ENCODE measurements at regions of chr2 and their contacts with region 1.

Region 1: GRCh38 chr2:217785544-217786045 is 217.2 kb downstream of the TNS1 start:
- DNase-seq: peak; percentile 70 to 90 (median 77)
- ATAC-seq: peak; percentile 88
- H3K4me3 ChIP-seq: no peak overlapping the region
- H3K27ac ChIP-seq: no peak overlapping the region
- H3K4me1 ChIP-seq: peaks cover 5 to 23% of the 10 kb centered on the region in 2 donors
- H3K27me3 ChIP-seq: no peaks in the 10 kb centered on the region
- CTCF ChIP-seq: peak; percentile 87 to 98

Region 2: DNA sequence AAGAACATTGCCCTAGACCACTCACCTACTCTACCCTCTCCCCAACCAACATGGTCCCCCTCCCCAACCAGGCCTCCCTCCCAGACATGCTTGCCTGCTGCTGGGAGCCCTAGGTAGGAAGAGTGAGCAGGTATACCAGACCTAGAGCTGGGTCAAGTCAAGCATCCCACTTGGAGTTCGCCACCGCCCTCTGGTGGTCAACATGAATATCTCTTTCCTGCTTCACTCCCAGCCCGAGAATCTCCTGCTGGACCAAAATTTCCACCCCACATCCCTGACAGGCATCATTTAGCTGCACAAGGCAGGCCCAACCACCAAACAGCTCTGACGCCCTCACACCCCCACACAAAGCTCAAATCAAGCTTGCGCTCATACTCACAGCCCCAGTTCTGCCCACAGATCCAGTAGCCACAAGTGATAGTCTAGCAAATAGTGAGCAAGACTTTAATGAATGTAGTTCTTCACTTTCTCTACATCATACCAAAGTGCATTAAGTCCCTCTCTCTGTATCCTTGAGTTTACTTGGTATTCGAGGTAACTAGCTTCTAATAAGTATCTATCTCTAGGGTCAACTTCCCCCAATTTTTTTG is 101.2 kb after region 1 on chr2:
- intact Hi-C with region 1: loop called in 1 of 2 experiments (anchors 5 kb)
- DNase-seq: peak in 3 of 4 donors; percentile 67 to 83 (median 68)
- ATAC-seq: peak; percentile 71
- H3K4me3 ChIP-seq: no peak overlapping the region
- H3K27ac ChIP-seq: peak overlapping the region in 1 of 2 donors; percentile 65
- H3K4me1 ChIP-seq: peaks cover 0 to 59% of the 10 kb centered on the region in 2 donors
- H3K27me3 ChIP-seq: no peaks in the 10 kb centered on the region
- CTCF ChIP-seq: peak; percentile 65 to 71

Region 3: GRCh38 chr2:217988014-217988839 is 202.6 kb after region 1 on chr2:
- intact Hi-C with region 1: loop called in 1 of 2 experiments (anchors 2 kb)
- DNase-seq: peak in 3 of 4 donors; percentile 71 to 91 (median 88)
- ATAC-seq: peak; percentile 91
- H3K4me3 ChIP-seq: no peak overlapping the region
- H3K27ac ChIP-seq: peak overlapping the region; percentile 29 to 75
- H3K4me1 ChIP-seq: peaks cover 15 to 23% of the 10 kb centered on the region in 2 donors
- H3K27me3 ChIP-seq: no peaks in the 10 kb centered on the region
- CTCF ChIP-seq: peak; percentile 90 to 98

Region 4: DNA sequence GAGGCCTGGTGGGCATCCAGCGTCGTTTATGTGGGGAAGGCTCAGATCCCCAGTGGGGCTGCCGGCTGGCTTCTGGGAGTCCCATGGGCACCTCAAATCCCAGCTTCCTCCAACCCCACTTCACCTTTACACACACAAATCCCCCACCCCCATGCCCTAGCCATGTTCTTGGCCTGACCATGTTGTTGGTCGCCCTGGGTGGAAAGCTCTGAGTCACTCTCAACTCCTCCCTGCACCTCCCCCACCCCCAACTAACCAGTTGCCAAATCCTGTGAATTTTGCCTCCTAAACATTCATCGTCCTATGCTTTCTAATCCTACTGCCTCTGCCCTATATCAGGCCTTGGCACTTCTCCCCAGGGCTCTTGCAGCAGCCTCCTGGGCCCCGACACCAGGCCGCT is 210.8 kb after region 1 on chr2:
- intact Hi-C with region 1: loop called in 1 of 2 experiments (anchors 5 kb)
- DNase-seq: peak in 1 of 4 donors; percentile 63
- ATAC-seq: peak; percentile 45
- H3K4me3 ChIP-seq: no peak overlapping the region
- H3K27ac ChIP-seq: peak overlapping the region in 1 of 2 donors; percentile 76
- H3K4me1 ChIP-seq: peaks cover 14 to 51% of the 10 kb centered on the region in 2 donors
- H3K27me3 ChIP-seq: no peaks in the 10 kb centered on the region
- CTCF ChIP-seq: no peak

Region 5: DNA sequence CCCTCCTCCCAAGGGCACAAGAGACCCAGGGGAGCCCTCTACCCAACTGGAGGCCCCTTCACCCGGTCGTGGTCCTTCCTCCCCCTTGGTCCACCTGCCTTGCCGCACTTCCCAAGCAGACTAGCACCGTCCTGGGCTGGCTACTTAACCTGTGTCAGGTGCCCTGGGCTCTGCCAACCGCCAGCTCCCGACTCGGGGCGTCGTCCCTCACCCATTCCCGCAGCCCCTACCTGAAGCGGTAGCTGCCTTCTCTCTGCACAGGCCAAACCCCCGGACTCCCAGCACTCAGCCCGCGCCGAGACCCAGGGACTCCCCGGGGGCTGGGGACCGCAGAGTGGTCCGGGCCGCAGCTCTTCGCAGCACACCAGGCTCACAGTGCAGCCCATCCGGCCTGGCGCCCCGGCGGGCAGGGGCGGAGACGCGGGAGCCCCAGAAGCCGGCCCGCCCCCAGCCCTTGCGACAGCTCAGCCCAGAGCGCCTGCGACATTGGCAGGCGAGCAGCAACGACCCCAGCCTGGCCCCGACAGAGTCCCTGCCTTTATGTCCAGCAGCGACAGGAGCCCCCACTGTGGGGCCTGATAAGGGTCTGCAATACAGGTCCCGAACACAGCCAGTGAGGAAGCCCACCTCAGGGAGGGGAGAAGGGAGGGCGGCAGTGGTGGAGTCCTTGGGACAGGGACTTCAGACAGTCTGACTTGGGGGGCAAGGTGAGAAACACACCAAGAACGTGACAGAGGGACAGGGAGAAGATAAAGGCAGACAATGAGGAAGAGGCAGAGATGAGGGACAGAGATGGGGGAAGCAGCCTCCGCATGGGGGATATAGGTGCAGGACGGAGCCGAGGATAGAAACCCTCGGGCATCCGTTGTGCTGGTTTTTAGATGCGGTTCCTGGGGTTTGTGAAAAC is 248.2 kb after region 1 on chr2:
- intact Hi-C with region 1: loop called in 1 of 2 experiments (anchors 10 kb)
- DNase-seq: peak in 2 of 4 donors; percentile 45 to 77
- ATAC-seq: no peak
- H3K4me3 ChIP-seq: peak overlapping the region in 1 of 2 donors; percentile 26
- H3K27ac ChIP-seq: no peak overlapping the region
- H3K4me1 ChIP-seq: peaks cover 0 to 17% of the 10 kb centered on the region in 2 donors
- H3K27me3 ChIP-seq: peaks cover 0 to 18% of the 10 kb centered on the region in 2 donors
- CTCF ChIP-seq: no peak

Region 6: GRCh38 chr2:218063486-218063885 is 277.9 kb after region 1 on chr2:
- intact Hi-C with region 1: loop called in 1 of 2 experiments (anchors 10 kb)
- DNase-seq: no peak
- ATAC-seq: peak; percentile 20
- H3K4me3 ChIP-seq: no peak overlapping the region
- H3K27ac ChIP-seq: no peak overlapping the region
- H3K4me1 ChIP-seq: peaks cover 0 to 13% of the 10 kb centered on the region in 2 donors
- H3K27me3 ChIP-seq: peaks cover 0 to 15% of the 10 kb centered on the region in 2 donors
- CTCF ChIP-seq: no peak